Activated CD4-positive, alpha-beta T cell treated with anti-CD3 and anti-CD28 coated beads, Interleukin-2, amount 10 ng/mL, durations not matched to agents 24 days and 14 days (primary cell): ENCODE measurements at regions of chr11 and their contacts with region 1.

Region 1: GRCh38 chr11:45102810-45103621 is 43.4 kb upstream of the PRDM11 start:
- DNase-seq: peak; percentile 87
- H3K4me3 Mint-ChIP-seq: peak overlapping the region; percentile 76
- H3K27ac Mint-ChIP-seq: peak overlapping the region; percentile 3
- H3K4me1 Mint-ChIP-seq: peaks cover 17% of the 10 kb centered on the region
- H3K27me3 Mint-ChIP-seq: peaks cover 17% of the 10 kb centered on the region

Region 2: GRCh38 chr11:44927174-44927661 is 175.8 kb before region 1 on chr11:
- intact Hi-C with region 1: loop called (anchors 1 kb)
- DNase-seq: peak; percentile 84
- H3K4me3 Mint-ChIP-seq: no peak overlapping the region
- H3K27ac Mint-ChIP-seq: no peak overlapping the region
- H3K4me1 Mint-ChIP-seq: no peaks in the 10 kb centered on the region
- H3K27me3 Mint-ChIP-seq: peaks cover 3% of the 10 kb centered on the region

Region 3: DNA sequence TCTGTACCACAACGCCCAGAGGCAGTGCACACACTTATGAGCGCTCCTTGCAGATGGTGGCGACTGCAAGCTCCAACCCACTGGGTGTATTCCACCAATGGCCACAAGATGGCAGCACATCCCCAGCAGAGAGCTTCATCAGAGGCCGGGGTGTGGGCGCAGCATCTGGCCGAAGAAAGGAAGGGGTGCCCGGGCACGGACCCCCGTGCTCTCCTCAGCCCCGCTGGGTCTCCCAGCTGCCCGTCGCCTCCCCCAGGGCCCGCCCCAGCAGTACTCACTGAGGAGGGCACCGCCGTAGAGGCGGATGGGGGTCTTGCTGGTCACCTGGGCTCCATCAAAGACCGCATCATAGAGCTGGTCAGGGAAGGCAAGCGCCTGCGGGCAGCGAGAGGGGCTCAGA is 166.5 kb before region 1 on chr11:
- intact Hi-C with region 1: loop called (anchors 1 kb)
- DNase-seq: peak; percentile 94
- H3K4me3 Mint-ChIP-seq: no peak overlapping the region
- H3K27ac Mint-ChIP-seq: no peak overlapping the region
- H3K4me1 Mint-ChIP-seq: no peaks in the 10 kb centered on the region
- H3K27me3 Mint-ChIP-seq: no peaks in the 10 kb centered on the region

Region 4: GRCh38 chr11:45436118-45436517 is 333.1 kb after region 1 on chr11:
- intact Hi-C with region 1: no loop called
- DNase-seq: no peak
- H3K4me3 Mint-ChIP-seq: no peak overlapping the region
- H3K27ac Mint-ChIP-seq: no peak overlapping the region
- H3K4me1 Mint-ChIP-seq: no peaks in the 10 kb centered on the region
- H3K27me3 Mint-ChIP-seq: peaks cover 4% of the 10 kb centered on the region